Testis (tissue), 5 donors: ENCODE measurements at regions of chr4 and their contacts with region 1.

Region 1: GRCh38 chr4:82450966-82451755 is 20.8 kb downstream of the ENOPH1 start:
- DNase-seq: no peak
- H3K4me3 ChIP-seq: no peak overlapping the region
- H3K27ac ChIP-seq: no peak overlapping the region
- H3K4me1 ChIP-seq: no peaks in the 10 kb centered on the region
- H3K27me3 ChIP-seq: no peaks in the 10 kb centered on the region
- CTCF ChIP-seq: no peak
- POLR2A ChIP-seq: no peak

Region 2: GRCh38 chr4:82500106-82500965 is 49.2 kb after region 1 on chr4:
- intact Hi-C with region 1: no loop called
- DNase-seq: no peak
- H3K4me3 ChIP-seq: no peak overlapping the region
- H3K27ac ChIP-seq: no peak overlapping the region
- H3K4me1 ChIP-seq: no peaks in the 10 kb centered on the region
- H3K27me3 ChIP-seq: no peaks in the 10 kb centered on the region
- CTCF ChIP-seq: no peak
- POLR2A ChIP-seq: no peak

Region 3: DNA sequence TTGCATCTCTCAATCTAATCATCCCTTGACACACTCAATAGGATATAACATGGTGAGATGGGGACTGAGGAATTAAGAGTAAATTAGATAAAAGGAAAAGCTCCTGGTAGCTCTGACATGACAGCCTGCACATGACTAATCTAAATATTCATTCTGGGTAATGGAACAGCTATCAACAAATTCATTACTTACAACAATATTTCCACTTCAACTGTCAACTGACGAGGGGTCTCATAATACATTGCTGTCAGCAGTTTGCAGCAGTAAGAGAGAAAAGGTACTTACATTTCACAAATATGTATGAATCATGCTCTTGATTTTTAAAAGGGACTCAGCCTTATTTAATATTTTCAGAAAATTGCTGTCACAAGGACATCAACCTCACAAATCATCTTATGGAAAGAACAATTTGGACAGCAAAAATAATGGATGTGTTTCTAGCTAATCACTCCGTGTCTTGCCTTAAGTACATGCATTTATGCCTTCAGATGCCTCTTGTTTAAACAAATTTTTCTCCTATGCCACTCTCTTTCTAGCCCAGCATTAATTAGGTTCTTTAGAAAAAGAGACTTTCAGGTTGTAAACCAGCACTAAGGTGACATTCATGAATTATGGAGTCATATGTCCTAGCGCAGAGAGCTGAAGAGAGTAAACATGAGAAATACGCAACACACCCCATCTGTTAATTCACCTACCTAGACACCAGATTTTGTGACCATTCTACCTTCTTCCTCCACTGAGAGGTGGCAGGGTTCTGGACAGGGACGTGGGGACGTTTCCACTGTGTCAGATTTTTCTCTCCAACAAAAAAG is 210.2 kb after region 1 on chr4:
- intact Hi-C with region 1: no loop called
- DNase-seq: no peak
- H3K4me3 ChIP-seq: no peak overlapping the region
- H3K27ac ChIP-seq: no peak overlapping the region
- H3K4me1 ChIP-seq: peaks cover 11% of the 10 kb centered on the region
- H3K27me3 ChIP-seq: no peaks in the 10 kb centered on the region
- CTCF ChIP-seq: no peak
- POLR2A ChIP-seq: no peak

Region 4: DNA sequence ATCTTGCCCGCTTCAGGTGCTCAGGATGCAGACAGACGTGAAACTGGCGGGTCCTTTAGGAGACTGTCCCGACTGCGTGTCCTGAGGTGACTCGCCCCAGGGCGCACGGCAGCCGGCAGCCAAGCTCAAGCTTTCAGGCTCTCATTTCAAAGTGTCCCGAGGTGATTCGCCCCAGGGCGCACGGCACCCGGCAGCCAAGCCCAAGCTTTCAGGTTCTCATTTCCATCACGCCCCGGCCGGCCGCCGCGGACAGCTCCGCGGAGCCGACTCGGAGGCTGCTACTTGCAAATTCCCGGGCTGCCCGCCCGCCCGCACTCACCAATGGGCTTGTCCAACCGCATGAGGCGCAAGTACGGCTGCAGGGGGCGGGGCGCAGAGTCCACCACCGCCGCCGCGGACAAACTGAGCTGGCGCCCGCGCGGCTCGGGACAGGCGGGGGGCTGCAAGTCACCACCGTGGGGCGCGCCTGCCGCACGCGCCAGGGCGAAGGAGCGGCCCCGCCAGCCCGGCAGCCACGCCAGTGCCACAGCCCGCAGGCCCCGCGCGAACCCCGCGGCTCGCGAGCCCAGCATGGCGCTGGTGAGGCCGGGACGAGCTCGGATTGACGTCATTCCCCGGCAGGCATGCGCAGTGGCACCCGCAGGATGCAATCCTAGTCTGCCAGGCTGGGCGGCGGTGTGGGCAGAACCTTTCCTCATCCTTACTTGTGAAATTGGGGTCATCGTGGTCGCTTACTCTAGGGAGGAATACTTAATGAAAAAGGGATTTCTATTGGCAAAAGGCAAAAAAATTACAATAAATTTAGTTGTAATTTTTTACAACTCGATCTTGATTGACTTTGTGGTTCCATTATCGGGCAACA is 833.3 kb after region 1 on chr4 and contains the start of gene COQ2:
- intact Hi-C with region 1: loop called (anchors 10 kb)
- DNase-seq: peak; percentile 96
- H3K4me3 ChIP-seq: peak within 1 kb of the TSS; percentile 79 to 81
- H3K27ac ChIP-seq: peak within 1 kb of the TSS; percentile 86 to 97
- H3K4me1 ChIP-seq: peaks cover 12% of the 10 kb centered on the region
- H3K27me3 ChIP-seq: no peaks in the 10 kb centered on the region
- CTCF ChIP-seq: peak in 2 of 3 experiments; percentile 34 to 58
- POLR2A ChIP-seq: peak; percentile 69
- total RNA-seq, gene COQ2: 18.8 to 19.4 TPM